ENCODE measurements at regions of chr4 and their contacts with region 1.

Region 1: DNA sequence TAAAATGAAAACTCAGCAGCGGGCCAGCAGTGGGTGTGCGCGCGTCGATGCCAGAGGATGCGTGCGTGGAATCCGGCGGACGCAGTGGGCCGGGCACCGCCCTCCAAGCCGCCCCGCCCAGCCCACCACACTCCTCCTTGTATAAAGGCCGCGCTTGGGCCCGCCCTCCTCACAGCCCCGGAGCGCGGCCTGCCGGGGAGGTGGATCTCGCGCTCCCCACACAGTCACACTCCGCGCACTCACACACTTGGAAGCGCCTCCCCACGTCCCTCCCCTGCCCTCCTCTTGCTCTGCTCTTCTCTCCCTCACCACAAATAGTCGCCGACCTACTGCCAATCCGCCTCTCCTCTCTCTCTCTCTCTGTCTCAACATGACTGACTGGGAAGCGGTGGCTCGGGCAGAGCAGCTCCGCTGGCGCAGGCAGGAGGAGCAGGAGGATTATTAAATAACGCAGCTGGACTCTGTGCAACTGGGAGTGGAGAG is at the start of gene CCSER1:
- DNase-seq: peak; percentile 69
- H3K4me3 Mint-ChIP-seq: peak within 1 kb of the TSS; percentile 91
- H3K27ac Mint-ChIP-seq: peak within 1 kb of the TSS; percentile 85
- H3K4me1 Mint-ChIP-seq: peaks cover 14% of the 10 kb centered on the region
- H3K27me3 Mint-ChIP-seq: no peaks in the 10 kb centered on the region
- CTCF ChIP-seq: no peak
- total RNA-seq, gene CCSER1: 6.2 and 7.1 TPM in 2 replicates

Region 2: DNA sequence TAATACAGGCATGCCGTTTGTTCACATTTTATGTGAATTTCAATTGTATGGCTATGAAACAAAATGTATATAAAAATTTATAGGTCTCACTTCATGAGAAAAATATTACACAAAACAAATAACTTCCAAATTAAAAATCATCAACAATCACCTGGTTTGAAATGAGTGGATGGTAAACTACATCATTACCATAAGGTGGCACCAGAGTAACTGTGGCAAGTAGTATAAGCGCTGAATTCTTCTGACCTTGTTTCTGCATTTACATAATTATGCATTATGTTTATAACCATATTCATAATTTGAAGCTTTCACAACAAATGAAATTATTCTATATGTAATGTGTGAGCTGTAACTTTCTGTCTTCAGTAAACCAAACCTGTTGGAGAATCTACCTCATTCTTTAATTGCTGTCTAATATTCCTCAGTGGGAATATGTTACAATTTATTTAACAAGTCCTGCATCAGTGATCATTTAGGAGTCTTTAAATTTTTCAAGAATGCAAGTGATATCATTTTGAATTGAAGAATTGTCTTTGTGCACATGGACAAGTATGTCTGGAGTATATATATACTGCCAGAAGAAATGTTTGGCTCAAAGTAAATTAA is 177.4 kb before region 1 on chr4:
- CTCF ChIA-PET with region 1: no interaction called
- intact Hi-C with region 1: loop called (anchors 10 kb)
- DNase-seq: no peak
- H3K4me3 Mint-ChIP-seq: no peak overlapping the region
- H3K27ac Mint-ChIP-seq: no peak overlapping the region
- H3K4me1 Mint-ChIP-seq: no peaks in the 10 kb centered on the region
- H3K27me3 Mint-ChIP-seq: no peaks in the 10 kb centered on the region
- CTCF ChIP-seq: no peak

Region 3: GRCh38 chr4:90025248-90025647 is 102.0 kb before region 1 on chr4:
- CTCF ChIA-PET with region 1: no interaction called
- intact Hi-C with region 1: loop called (anchors 5 kb)
- DNase-seq: no peak
- H3K4me3 Mint-ChIP-seq: no peak overlapping the region
- H3K27ac Mint-ChIP-seq: no peak overlapping the region
- H3K4me1 Mint-ChIP-seq: no peaks in the 10 kb centered on the region
- H3K27me3 Mint-ChIP-seq: no peaks in the 10 kb centered on the region
- CTCF ChIP-seq: no peak

Region 4: DNA sequence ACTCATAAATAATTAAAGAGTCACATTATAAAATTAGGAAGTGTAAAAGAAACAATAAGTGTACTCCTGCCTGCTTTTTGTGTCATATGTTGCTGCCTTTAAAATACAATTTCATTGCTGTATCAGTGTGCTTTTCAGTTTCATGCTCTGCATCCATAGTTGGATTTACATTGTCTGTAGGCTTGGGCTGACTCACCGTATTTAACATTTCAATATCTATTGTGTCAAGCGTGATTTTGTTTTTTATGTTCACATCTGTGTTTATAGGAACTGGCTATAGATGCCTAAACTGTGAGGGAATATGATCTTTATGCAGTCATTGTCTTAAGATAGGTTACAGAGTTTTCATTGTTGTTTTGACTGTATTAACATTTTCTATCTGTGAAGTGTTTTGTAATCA is 18.1 kb after region 1 on chr4:
- CTCF ChIA-PET with region 1: no interaction called
- intact Hi-C with region 1: no loop called
- DNase-seq: no peak
- H3K4me3 Mint-ChIP-seq: no peak overlapping the region
- H3K27ac Mint-ChIP-seq: no peak overlapping the region
- H3K4me1 Mint-ChIP-seq: no peaks in the 10 kb centered on the region
- H3K27me3 Mint-ChIP-seq: no peaks in the 10 kb centered on the region
- CTCF ChIP-seq: no peak

Region 5: GRCh38 chr4:90174611-90175133 is 47.4 kb after region 1 on chr4:
- CTCF ChIA-PET with region 1: no interaction called
- intact Hi-C with region 1: loop called (anchors 2 kb)
- DNase-seq: peak; percentile 48
- H3K4me3 Mint-ChIP-seq: no peak overlapping the region
- H3K27ac Mint-ChIP-seq: peak overlapping the region; percentile 82
- H3K4me1 Mint-ChIP-seq: peaks cover 34% of the 10 kb centered on the region
- H3K27me3 Mint-ChIP-seq: no peaks in the 10 kb centered on the region
- CTCF ChIP-seq: no peak

Region 6: DNA sequence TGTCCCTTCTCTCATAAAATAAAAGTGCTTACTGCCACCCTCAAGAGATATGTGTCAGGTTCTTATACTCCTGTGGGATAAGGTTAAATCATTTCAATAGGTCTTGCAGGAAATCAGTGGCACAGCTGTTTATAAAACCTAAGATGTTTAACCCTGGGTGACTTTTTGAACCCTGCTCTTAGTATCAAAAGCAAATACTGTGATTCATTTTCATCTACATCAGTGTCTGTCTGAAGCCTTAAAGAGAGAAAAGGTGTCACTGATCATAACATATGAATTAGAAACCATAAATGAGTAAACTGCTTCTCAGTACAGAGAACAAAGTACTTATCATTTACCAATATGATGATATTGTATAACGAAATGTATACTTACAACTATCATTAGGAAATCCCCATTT is 59.0 kb after region 1 on chr4:
- CTCF ChIA-PET with region 1: no interaction called
- intact Hi-C with region 1: no loop called
- DNase-seq: no peak
- H3K4me3 Mint-ChIP-seq: no peak overlapping the region
- H3K27ac Mint-ChIP-seq: no peak overlapping the region
- H3K4me1 Mint-ChIP-seq: peaks cover 35% of the 10 kb centered on the region
- H3K27me3 Mint-ChIP-seq: no peaks in the 10 kb centered on the region
- CTCF ChIP-seq: no peak

Region 7: GRCh38 chr4:90209922-90210321 is 82.7 kb after region 1 on chr4:
- CTCF ChIA-PET with region 1: no interaction called
- intact Hi-C with region 1: no loop called
- DNase-seq: no peak
- H3K4me3 Mint-ChIP-seq: no peak overlapping the region
- H3K27ac Mint-ChIP-seq: peak overlapping the region; percentile 27
- H3K4me1 Mint-ChIP-seq: peaks cover 7% of the 10 kb centered on the region
- H3K27me3 Mint-ChIP-seq: no peaks in the 10 kb centered on the region
- CTCF ChIP-seq: no peak

Measured in Calu3 (cell line).